ACHN (cell line): ENCODE measurements at regions of chr5 and their contacts with region 1.

Region 1: DNA sequence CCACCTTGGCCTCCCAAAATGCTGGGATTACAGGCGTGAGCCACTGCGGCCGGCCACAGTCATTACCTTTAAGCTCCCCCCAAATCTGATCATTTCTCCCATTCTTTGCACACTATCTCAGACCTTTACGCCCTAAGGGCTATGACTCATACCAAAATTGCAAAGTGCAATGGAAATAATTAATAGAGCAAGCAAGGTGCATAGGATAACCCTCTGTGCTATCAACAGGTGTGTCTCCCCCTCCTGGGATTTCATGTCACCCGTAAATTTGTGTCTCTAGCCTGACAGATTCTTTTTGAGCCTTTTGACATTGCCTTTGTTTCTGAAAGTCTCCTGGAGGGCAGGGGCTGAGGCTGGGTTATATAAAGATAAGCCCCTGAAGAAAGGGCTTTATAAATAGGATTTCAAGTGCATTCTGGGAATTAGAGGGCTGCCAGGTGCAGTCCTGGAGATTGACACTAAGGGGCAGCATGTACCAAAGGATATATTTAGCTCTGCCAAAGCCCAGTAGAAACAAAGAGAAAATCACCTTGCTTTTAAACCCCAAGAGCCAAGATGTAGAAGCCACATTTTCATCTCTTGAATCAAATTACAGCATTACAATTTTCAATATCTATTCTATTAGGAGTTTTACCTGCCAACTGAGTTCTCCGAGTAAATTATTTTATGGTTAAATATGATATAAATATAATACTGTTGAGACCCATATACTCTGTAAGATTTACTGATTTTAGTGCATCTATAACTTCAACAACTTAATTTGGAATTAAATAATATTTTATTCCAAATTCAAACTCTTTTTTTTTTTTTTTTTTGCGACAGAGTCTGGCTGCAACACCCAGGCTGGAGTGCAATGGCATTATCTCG is 18.2 kb downstream of the S100Z start:
- DNase-seq: peak; percentile 63

Region 2: GRCh38 chr5:77030097-77031071 is 162.3 kb after region 1 on chr5 and contains the start of gene AGGF1:
- in situ Hi-C with region 1: loop called (anchors 25 kb)
- DNase-seq: peak; percentile 91